GM10248 (cell line): ENCODE measurements at regions of chr1 and their contacts with region 1.

Region 1: GRCh38 chr1:167270349-167271092 is 49.8 kb downstream of the POU2F1 start:
- DNase-seq: no peak
- CTCF ChIP-seq: no peak

Region 2: GRCh38 chr1:166822385-166822784 is 448.1 kb before region 1 on chr1:
- CTCF ChIA-PET with region 1: no interaction called
- POLR2A ChIA-PET with region 1: no interaction called
- DNase-seq: no peak
- CTCF ChIP-seq: no peak

Region 3: GRCh38 chr1:166999090-166999489 is 271.4 kb before region 1 on chr1:
- CTCF ChIA-PET with region 1: no interaction called
- POLR2A ChIA-PET with region 1: no interaction called
- DNase-seq: no peak
- CTCF ChIP-seq: no peak

Region 4: DNA sequence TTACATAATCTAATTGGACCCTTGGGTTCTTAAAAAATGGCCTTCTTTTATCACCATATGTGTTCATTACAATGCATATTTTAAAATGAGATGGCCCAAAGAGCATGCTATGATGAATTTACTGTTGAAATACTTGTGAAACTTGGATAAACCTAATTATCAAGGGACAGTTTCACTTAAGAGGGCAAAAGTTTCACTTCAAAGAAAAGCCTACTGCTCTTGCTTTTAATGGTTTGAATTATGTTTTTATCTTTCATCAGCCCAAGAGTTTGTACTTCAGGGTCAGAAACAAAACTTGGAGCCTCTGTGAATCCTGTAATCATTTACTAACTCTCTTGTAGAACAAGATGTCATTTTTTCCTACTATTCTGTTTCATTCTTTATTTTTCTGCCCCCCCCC is 17.5 kb before region 1 on chr1:
- CTCF ChIA-PET with region 1: interaction called, 43 read pairs
- POLR2A ChIA-PET with region 1: no interaction called
- DNase-seq: no peak
- CTCF ChIP-seq: no peak

Region 5: DNA sequence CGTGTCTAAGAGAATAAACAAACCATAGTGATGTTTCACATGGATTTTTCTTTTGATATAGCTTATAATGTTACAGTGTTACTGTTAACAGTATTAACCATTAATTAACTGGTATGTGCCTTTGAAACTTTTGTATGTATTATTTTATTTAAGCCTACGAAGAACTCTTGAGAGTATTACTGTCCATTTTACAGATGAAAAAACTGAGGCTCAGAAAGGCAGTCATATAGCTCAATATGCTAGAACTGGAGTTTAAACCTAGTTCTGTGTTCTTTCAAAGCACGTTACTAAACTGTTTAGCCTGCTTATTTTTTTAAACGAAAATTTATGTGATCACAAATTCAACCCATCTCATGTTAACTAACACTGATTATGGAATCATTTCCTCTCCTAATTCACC is 33.6 kb after region 1 on chr1:
- CTCF ChIA-PET with region 1: interaction called, 13 read pairs
- POLR2A ChIA-PET with region 1: no interaction called
- DNase-seq: no peak
- CTCF ChIP-seq: no peak

Region 6: DNA sequence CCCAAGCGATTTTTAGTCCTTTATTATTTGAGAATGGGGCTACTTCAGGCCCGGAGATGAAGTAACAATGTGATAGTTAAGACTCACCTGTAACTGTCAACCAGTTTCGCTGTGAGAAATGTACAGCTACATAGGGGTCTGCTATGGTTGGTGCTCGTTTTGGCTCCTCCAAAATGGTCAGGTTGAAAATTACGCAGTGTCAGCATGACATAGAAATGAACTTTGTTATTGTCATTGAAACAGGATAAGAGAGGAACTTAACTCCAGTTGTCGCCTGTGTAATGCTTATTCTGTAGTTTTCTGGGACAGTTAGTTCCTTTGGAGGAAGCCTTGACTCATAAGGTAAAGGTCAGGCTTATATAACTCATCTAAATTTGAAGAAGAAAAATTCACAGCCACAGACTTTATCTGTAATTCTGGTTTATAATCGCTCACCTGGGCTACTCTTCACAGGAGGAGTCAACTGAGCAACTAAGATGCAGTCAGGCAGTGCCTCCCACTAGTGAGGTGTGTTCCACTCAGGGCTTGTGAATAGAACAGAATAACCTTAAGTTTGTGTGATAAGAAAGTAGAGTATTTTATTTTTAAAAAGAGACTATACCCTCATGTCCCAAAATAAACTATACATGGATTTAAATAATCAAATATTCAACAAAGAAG is 116.9 kb after region 1 on chr1:
- CTCF ChIA-PET with region 1: interaction called, 11 read pairs
- POLR2A ChIA-PET with region 1: no interaction called
- DNase-seq: no peak
- CTCF ChIP-seq: no peak

Region 7: DNA sequence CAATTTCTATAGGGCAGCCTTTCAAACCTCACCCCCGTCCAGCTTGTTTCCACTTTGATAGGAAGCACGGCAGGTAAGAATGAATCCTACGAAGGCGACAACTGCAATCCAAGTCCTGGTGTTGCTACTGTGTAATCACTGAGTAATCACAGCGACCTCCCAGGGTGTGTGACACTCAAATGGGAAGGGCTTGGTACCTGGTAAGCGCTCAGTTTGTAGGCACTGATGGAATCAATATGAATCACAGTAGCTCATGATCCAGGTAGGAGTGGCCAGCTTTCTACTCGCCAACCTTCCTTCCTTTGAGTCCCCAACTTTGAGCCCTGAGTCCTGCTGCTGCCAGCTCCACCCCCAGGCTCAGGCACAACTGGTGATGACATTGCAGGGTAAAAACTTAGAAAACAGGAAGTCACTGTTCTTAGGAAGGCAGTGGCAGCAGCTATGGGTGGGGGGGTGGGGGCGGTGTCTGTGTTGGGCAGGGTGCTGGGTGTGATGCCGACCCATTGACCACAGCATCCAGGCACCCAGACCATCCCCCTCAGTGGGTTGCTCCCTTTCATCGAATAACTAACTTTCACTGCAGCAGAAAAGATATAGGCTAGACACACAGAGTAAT is 177.1 kb after region 1 on chr1:
- CTCF ChIA-PET with region 1: interaction called, 75 read pairs
- POLR2A ChIA-PET with region 1: no interaction called
- DNase-seq: no peak
- CTCF ChIP-seq: no peak

Region 8: DNA sequence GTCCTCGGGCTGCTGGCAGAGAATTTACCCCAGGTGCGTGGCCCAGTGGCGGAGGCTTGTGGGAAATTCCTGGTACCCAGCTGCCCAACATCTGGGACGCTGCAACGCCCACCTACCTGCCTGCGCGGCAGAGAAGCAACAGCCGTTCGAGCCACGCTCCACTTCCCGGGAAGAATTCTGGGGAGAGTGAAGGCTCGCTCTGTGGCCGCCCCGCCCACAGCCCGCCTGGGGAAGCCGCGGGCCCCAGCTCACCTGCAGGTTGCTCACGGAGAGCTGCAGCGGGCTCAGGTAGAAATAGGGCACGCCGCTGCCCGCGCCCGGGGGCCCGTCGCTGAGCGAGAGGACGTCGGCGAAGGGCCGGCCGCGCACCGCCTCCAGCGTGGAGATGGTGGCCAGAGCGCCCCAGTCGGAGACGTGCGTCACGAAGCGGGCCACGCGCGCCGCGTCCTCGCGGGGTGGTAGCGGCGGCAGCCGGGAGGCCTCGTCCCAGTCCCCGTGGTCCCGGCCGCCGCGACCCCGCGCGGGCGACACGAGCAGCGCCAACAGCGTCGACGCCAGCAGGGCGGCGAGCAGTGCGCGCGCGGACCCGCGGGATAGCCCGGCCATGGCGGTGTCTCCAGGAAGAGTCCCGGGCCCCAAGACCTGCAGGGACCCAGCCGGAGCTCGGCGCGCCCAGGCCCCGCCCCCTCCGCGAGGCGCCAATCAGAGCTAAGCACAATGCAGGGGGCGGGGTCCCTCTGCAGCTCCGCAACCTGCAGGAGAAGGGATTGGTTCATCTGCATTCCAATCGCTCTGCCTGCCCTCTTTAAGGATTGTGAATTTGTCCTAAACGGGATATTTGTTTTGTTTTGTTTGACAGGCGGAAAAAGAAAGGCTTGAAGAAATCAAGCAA is 282.9 kb after region 1 on chr1 and contains the start of gene CREG1:
- CTCF ChIA-PET with region 1: interaction called, 11 read pairs
- POLR2A ChIA-PET with region 1: no interaction called
- DNase-seq: peak; percentile 95
- CTCF ChIP-seq: no peak